Activated CD4-positive, alpha-beta memory T cell treated with anti-CD3 and anti-CD28 coated beads for 36 hours (primary cell): ENCODE measurements at regions of chr4 and their contacts with region 1.

Region 1: GRCh38 chr4:77586951-77587383 is 18.7 kb upstream of the CXCL13 start:
- DNase-seq: peak; percentile 87
- H3K4me3 Mint-ChIP-seq: peak overlapping the region; percentile 33
- H3K27ac Mint-ChIP-seq: peak overlapping the region; percentile 71
- H3K4me1 Mint-ChIP-seq: peaks cover 46% of the 10 kb centered on the region
- H3K27me3 Mint-ChIP-seq: peaks cover 15% of the 10 kb centered on the region

Region 2: DNA sequence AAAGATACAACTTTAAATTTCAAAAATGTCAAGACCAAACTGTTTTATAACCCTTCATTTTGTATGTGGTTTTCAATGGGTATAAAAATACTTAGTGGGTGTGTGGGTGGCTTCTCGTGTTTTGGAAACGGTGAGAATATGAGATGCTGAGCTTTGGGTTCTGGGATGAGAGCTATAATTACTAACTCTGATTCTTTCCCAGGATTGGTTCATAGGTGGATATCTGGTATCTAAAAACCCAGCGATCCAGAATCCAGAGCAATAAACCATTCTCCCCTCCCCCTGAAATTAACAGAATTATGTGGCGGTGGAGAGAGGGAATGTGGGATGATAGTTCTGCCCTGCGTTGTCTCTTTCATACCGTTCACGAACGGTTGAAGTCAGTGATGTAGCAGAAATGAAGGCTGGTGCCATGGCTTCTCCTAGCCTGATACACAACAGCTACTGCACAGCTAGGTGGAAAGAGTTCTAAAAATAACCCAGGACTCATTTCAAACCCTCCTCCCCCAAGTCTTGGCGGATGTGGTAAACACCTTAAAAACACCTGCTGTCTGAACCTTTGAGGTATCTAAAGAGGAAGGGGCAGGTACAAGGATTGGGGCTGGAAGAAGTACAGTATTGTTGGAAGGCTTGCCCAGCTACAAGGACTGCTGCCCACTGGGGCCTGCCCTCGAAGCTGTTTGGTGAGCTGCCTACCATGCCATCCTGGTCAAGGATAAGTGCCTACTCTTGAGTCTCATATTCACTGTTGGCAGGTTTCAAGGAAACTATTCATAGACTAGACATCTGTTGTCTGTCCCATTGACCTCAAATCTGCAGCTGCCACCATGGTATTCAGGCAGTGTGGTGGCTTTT is 593.0 kb before region 1 on chr4:
- CTCF ChIA-PET with region 1: no interaction called
- POLR2A ChIA-PET with region 1: no interaction called
- intact Hi-C with region 1: loop called (anchors 10 kb)
- DNase-seq: peak; percentile 73
- H3K4me3 Mint-ChIP-seq: peak overlapping the region; percentile 11
- H3K27ac Mint-ChIP-seq: no peak overlapping the region
- H3K4me1 Mint-ChIP-seq: peaks cover 53% of the 10 kb centered on the region
- H3K27me3 Mint-ChIP-seq: peaks cover 5% of the 10 kb centered on the region

Region 3: DNA sequence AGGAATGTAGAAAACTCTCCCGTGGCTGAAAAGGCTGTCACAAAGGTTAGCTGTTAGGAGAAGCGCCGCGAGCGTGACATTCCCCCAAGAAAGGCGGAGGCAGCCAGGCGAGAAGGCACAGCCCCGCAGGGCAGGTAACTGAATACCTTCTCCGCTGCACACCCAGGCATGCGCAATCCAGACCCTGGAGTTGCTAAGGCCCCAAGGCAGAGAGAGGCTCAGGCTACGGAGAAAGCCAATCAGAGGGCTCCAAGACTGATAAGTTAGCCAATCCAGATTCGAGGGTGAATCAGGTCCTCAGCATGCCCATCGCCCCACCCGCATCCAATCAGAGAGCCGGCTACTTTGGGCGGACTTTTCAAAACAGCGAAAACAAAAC is 430.4 kb before region 1 on chr4:
- CTCF ChIA-PET with region 1: no interaction called
- POLR2A ChIA-PET with region 1: no interaction called
- intact Hi-C with region 1: loop called (anchors 2 kb)
- DNase-seq: peak; percentile 97
- H3K4me3 Mint-ChIP-seq: peak overlapping the region; percentile 95
- H3K27ac Mint-ChIP-seq: peak overlapping the region; percentile 94
- H3K4me1 Mint-ChIP-seq: peaks cover 27% of the 10 kb centered on the region
- H3K27me3 Mint-ChIP-seq: no peaks in the 10 kb centered on the region

Region 4: GRCh38 chr4:77629885-77630284 is 42.9 kb after region 1 on chr4:
- CTCF ChIA-PET with region 1: interaction called, 5 read pairs
- POLR2A ChIA-PET with region 1: interaction called, 5 read pairs
- intact Hi-C with region 1: loop called (anchors 1 kb)
- DNase-seq: peak; percentile 33
- H3K4me3 Mint-ChIP-seq: no peak overlapping the region
- H3K27ac Mint-ChIP-seq: peak overlapping the region; percentile 49
- H3K4me1 Mint-ChIP-seq: peaks cover 15% of the 10 kb centered on the region
- H3K27me3 Mint-ChIP-seq: peaks cover 1% of the 10 kb centered on the region

Region 5: GRCh38 chr4:77662396-77662795 is 75.4 kb after region 1 on chr4:
- CTCF ChIA-PET with region 1: no interaction called
- POLR2A ChIA-PET with region 1: no interaction called
- intact Hi-C with region 1: no loop called
- DNase-seq: no peak
- H3K4me3 Mint-ChIP-seq: no peak overlapping the region
- H3K27ac Mint-ChIP-seq: no peak overlapping the region
- H3K4me1 Mint-ChIP-seq: peaks cover 2% of the 10 kb centered on the region
- H3K27me3 Mint-ChIP-seq: no peaks in the 10 kb centered on the region

Region 6: GRCh38 chr4:77952457-77952856 is 365.5 kb after region 1 on chr4:
- CTCF ChIA-PET with region 1: no interaction called
- POLR2A ChIA-PET with region 1: no interaction called
- intact Hi-C with region 1: loop called (anchors 1 kb)
- DNase-seq: no peak
- H3K4me3 Mint-ChIP-seq: no peak overlapping the region
- H3K27ac Mint-ChIP-seq: no peak overlapping the region
- H3K4me1 Mint-ChIP-seq: peaks cover 13% of the 10 kb centered on the region
- H3K27me3 Mint-ChIP-seq: no peaks in the 10 kb centered on the region